ENCODE measurements at regions of chr1 and their contacts with region 1.

Region 1: GRCh38 chr1:67500413-67500959 is 70.3 kb upstream of the SERBP1 start:
- DNase-seq: peak; percentile 67 to 91 (median 80)
- ATAC-seq: peak; percentile 97 to 99 (median 98)
- H3K4me3 ChIP-seq: no peak overlapping the region
- H3K4me3 Mint-ChIP-seq: no peak overlapping the region
- H3K27ac ChIP-seq: no peak overlapping the region
- H3K27ac Mint-ChIP-seq: no peak overlapping the region
- H3K4me1 ChIP-seq: peaks cover 0 to 6% of the 10 kb centered on the region in 2 experiments
- H3K4me1 Mint-ChIP-seq: peaks cover 4 to 6% (median 5%) of the 10 kb centered on the region in 3 donors
- H3K27me3 ChIP-seq: peaks cover 0 to 3% of the 10 kb centered on the region in 2 experiments
- H3K27me3 Mint-ChIP-seq: peaks cover 4 to 9% of the 10 kb centered on the region in 2 donors

Region 2: GRCh38 chr1:67230539-67230938 is 269.9 kb before region 1 on chr1:
- CTCF ChIA-PET with region 1: interaction called, 16 to 25 read pairs
- POLR2A ChIA-PET with region 1: no interaction called
- DNase-seq: no peak
- ATAC-seq: no peak
- H3K4me3 ChIP-seq: no peak overlapping the region
- H3K4me3 Mint-ChIP-seq: no peak overlapping the region
- H3K27ac ChIP-seq: no peak overlapping the region
- H3K27ac Mint-ChIP-seq: no peak overlapping the region
- H3K4me1 ChIP-seq: no peaks in the 10 kb centered on the region
- H3K4me1 Mint-ChIP-seq: peaks cover 0 to 6% (median 5%) of the 10 kb centered on the region in 3 donors
- H3K27me3 ChIP-seq: no peaks in the 10 kb centered on the region
- H3K27me3 Mint-ChIP-seq: peaks cover 0 to 3% of the 10 kb centered on the region in 2 donors

Region 3: GRCh38 chr1:67236277-67236676 is 264.2 kb before region 1 on chr1:
- CTCF ChIA-PET with region 1: interaction called, 16 to 25 read pairs
- POLR2A ChIA-PET with region 1: no interaction called
- DNase-seq: no peak
- ATAC-seq: no peak
- H3K4me3 ChIP-seq: no peak overlapping the region
- H3K4me3 Mint-ChIP-seq: no peak overlapping the region
- H3K27ac ChIP-seq: no peak overlapping the region
- H3K27ac Mint-ChIP-seq: no peak overlapping the region
- H3K4me1 ChIP-seq: no peaks in the 10 kb centered on the region
- H3K4me1 Mint-ChIP-seq: peaks cover 0 to 2% (median 0%) of the 10 kb centered on the region in 3 donors
- H3K27me3 ChIP-seq: no peaks in the 10 kb centered on the region
- H3K27me3 Mint-ChIP-seq: no peaks in the 10 kb centered on the region

Region 4: DNA sequence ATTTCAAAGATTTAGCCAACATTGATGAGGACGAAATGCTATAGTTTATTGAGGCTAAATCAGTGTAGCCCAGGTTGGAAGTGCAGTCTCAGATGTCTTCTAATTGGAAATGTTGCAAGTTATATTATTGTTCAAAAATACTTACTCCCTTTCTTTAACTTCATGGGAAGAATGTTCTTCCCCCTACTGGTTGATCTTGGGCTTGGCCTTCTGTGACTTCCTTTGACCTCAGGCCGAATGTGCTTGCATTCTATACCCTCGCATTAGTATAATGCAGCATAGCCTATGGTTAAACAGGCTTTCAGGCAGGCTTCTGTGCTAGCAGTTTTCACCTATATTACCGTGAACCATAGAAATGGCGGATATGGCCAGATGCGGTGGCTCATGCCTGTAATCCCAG is 872.0 kb after region 1 on chr1:
- CTCF ChIA-PET with region 1: no interaction called
- POLR2A ChIA-PET with region 1: no interaction called
- DNase-seq: no peak
- ATAC-seq: no peak
- H3K4me3 ChIP-seq: no peak overlapping the region
- H3K4me3 Mint-ChIP-seq: no peak overlapping the region
- H3K27ac ChIP-seq: no peak overlapping the region
- H3K27ac Mint-ChIP-seq: no peak overlapping the region
- H3K4me1 ChIP-seq: no peaks in the 10 kb centered on the region
- H3K4me1 Mint-ChIP-seq: no peaks in the 10 kb centered on the region
- H3K27me3 ChIP-seq: no peaks in the 10 kb centered on the region
- H3K27me3 Mint-ChIP-seq: no peaks in the 10 kb centered on the region

Measured in T-cell (primary cell).